GM23248 (cell line): ENCODE measurements at regions of chr9 and their contacts with region 1.

Region 1: GRCh38 chr9:133527444-133527920 is 2.7 kb upstream of the MYMK start:
- DNase-seq: no peak
- H3K4me3 ChIP-seq: no peak overlapping the region
- H3K27ac ChIP-seq: no peak overlapping the region
- H3K4me1 ChIP-seq: no peaks in the 10 kb centered on the region
- H3K27me3 ChIP-seq: peaks cover 61% of the 10 kb centered on the region

Region 2: DNA sequence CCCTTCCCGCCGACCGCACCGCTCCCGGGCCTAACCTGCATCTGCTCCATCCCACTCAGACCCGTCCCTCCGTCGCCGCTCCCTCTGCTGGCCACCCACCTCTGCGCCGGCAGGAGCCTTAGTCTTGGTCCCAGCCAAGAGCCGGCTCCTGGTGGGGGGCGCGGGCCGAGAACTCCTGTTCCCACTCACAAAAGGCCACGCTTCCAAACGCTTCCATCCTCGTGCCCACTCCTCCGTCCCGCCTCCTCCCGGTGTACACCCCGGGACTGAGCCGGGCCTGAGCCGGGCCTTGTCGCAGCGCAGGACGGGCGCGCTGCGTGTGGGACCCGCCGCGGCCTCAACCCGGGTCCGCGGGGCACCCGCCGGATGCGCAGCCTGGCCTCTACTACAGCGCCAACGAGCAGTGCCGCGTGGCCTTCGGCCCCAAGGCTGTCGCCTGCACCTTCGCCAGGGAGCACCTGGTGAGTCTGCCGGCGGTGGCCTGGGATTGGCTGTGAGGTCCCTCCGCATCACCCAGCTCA is 97.8 kb before region 1 on chr9:
- in situ Hi-C with region 1: no loop called
- DNase-seq: peak; percentile 52
- H3K4me3 ChIP-seq: no peak overlapping the region
- H3K27ac ChIP-seq: no peak overlapping the region
- H3K4me1 ChIP-seq: no peaks in the 10 kb centered on the region
- H3K27me3 ChIP-seq: peaks cover 7% of the 10 kb centered on the region; the same call in 1 of the 2 replicates

Region 3: GRCh38 chr9:133726401-133727276 is 199.2 kb after region 1 on chr9:
- in situ Hi-C with region 1: loop called (anchors 10 kb)
- DNase-seq: peak; percentile 58
- H3K4me3 ChIP-seq: no peak overlapping the region
- H3K27ac ChIP-seq: no peak overlapping the region
- H3K4me1 ChIP-seq: no peaks in the 10 kb centered on the region
- H3K27me3 ChIP-seq: peaks cover 19% of the 10 kb centered on the region